HAP-1 (cell line): ENCODE measurements at regions of chr11 and their contacts with region 1.

Region 1: DNA sequence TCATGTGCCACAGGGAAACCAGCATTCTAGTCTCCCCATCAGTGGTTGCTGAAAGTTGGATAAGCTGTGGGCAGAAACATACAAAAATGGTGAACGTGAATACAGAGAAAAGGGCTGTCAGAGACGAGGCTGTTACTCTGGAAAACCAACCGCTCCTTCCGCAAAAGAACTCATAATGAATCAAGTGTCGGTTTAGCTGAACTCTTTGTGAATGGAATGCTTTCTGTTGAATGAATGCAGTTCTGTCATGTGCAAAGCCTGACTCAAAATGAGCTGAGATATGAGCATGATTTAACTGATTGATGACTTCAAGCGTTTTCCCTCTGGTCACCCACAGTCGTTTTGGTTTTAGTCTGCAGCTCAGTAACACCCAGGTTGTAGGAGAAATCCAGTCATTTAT is 298.3 kb downstream of the ETS1 start:
- DNase-seq: no peak
- H3K4me3 ChIP-seq: no peak overlapping the region
- H3K4me1 ChIP-seq: no peaks in the 10 kb centered on the region
- H3K27me3 ChIP-seq: peaks cover 3% of the 10 kb centered on the region; the same call in 1 of the 2 replicates

Region 2: GRCh38 chr11:128157423-128158298 is 131.4 kb before region 1 on chr11:
- in situ Hi-C with region 1: no loop called
- DNase-seq: peak; percentile 47 to 73
- H3K4me3 ChIP-seq: no peak overlapping the region
- H3K4me1 ChIP-seq: no peaks in the 10 kb centered on the region
- H3K27me3 ChIP-seq: no peaks in the 10 kb centered on the region

Region 3: GRCh38 chr11:128624269-128625175 is 335.5 kb after region 1 on chr11:
- in situ Hi-C with region 1: loop called (anchors 5 kb)
- DNase-seq: no peak
- H3K4me3 ChIP-seq: no peak overlapping the region
- H3K4me1 ChIP-seq: no peaks in the 10 kb centered on the region
- H3K27me3 ChIP-seq: no peaks in the 10 kb centered on the region